HEK293T (cell line): ENCODE measurements at regions of chr1 and their contacts with region 1.

Region 1: GRCh38 chr1:169110689-169111447 is 4.4 kb downstream of the ATP1B1 start:
- DNase-seq: no peak

Region 2: DNA sequence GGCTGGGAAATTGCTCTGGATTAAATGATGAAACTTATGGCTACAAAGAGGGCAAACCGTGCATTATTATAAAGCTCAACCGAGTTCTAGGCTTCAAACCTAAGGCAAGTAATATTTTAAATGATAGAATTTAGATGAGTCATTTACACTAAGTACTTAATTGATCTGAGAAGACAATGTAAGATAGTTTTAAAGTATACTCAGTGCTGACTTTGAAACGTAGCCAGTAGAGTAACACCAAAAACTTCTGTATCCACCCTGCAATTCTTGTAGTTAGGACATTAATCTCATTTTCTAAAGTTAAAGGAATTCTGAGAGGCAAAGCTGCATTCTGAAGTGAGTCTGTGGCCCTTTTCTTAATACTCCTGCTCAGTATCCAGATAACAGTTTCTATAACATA is 16.4 kb after region 1 on chr1:
- CTCF ChIA-PET with region 1: interaction called, 10 read pairs
- POLR2A ChIA-PET with region 1: no interaction called
- DNase-seq: no peak